K562 (cell line): ENCODE measurements at regions of chr17 and their contacts with region 1.

Region 1: DNA sequence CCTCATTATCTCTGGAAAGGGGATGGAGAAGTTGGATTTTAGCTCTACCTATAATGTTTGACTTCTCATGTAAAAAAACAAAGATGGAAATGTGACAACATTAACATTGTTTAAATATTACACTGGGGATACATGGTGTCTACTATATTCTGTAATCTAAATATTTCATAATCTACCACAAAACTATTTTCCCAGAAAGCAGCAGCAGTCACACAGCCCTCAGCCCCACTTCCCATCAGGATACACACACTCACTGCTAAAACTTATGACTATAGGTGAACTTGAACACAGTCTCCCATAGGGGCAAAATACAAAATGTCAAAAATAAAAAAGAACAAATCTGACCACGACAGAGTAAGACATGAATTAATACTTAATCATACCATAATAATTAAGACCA is 95.7 kb downstream of the KANSL1 start:
- DNase-seq: no peak
- ATAC-seq: no peak
- H3K4me3 ChIP-seq: no peak overlapping the region
- H3K27ac ChIP-seq: no peak overlapping the region
- H3K4me1 ChIP-seq: peaks cover 16 to 23% of the 10 kb centered on the region in 2 experiments
- H3K27me3 ChIP-seq: no peaks in the 10 kb centered on the region
- CTCF ChIP-seq: no peak
- EP300 ChIP-seq: no peak
- POLR2A ChIP-seq: no peak
- RAD21 ChIP-seq: no peak

Region 2: DNA sequence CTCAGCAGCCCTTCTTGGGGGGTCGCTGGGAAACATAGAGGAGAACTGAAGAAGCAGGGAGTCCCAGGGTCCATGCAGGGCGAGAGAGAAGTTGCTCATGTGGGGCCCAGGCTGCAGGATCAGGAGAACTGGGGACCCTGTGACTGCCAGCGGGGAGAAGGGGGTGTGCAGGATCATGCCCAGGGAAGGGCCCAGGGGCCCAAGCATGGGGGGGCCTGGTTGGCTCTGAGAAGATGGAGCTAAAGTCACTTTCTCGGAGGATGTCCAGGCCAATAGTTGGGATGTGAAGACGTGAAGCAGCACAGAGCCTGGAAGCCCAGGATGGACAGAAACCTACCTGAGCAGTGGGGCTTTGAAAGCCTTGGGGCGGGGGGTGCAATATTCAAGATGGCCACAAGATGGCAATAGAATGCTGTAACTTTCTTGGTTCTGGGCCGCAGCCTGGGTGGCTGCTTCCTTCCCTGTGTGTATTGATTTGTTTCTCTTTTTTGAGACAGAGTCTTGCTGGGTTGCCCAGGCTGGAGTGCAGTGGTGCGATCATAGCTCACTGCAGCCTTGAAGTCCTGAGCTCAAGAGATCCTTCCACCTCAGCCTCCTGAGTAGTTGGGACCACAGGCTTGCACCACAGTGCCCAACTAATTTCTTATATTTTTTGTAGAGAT is 95.1 kb before region 1 on chr17:
- CTCF ChIA-PET with region 1: no interaction called
- POLR2A ChIA-PET with region 1: no interaction called
- in situ Hi-C with region 1: no loop called
- intact Hi-C with region 1: no loop called
- DNase-seq: peak; percentile 74 to 79 (median 76)
- ATAC-seq: peak; percentile 95
- H3K4me3 ChIP-seq: no peak overlapping the region
- H3K27ac ChIP-seq: no peak overlapping the region
- H3K4me1 ChIP-seq: peaks cover 0 to 12% of the 10 kb centered on the region in 2 experiments; a peak in 2 of 5 replicates
- H3K27me3 ChIP-seq: no peaks in the 10 kb centered on the region
- CTCF ChIP-seq: peak; percentile 88 to 91 (median 91)
- EP300 ChIP-seq: no peak
- POLR2A ChIP-seq: no peak
- RAD21 ChIP-seq: peak; percentile 79 to 91

Region 3: DNA sequence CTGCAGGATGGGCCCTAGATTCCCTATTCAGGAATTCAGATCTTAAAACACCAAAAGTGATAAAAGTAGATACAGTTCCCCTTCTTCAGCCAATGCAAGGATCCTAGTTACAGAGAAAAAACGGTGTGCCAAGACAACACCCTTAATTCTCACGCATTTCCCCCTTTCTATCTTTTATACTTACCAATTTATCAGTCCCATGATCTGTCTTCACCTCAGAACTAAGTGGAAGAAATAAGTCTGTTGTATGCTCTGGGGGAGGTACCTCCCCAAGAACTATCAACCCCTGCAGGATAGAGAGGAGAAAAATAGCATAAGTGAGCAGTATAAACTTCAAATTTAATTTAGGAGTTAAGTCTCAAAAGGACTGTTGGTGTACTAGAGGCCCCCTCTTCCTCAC is 15.2 kb before region 1 on chr17:
- CTCF ChIA-PET with region 1: no interaction called
- POLR2A ChIA-PET with region 1: interaction called, 12 read pairs
- in situ Hi-C with region 1: no loop called
- intact Hi-C with region 1: no loop called
- DNase-seq: no peak
- ATAC-seq: peak; percentile 3; the same call in 2 of the 3 replicates
- H3K4me3 ChIP-seq: no peak overlapping the region
- H3K27ac ChIP-seq: peak overlapping the region; percentile 59; the same call in 2 of the 3 replicates
- H3K4me1 ChIP-seq: peaks cover 22 to 63% of the 10 kb centered on the region in 2 experiments
- H3K27me3 ChIP-seq: no peaks in the 10 kb centered on the region
- CTCF ChIP-seq: no peak
- EP300 ChIP-seq: no peak
- POLR2A ChIP-seq: no peak
- RAD21 ChIP-seq: no peak

Region 4: GRCh38 chr17:46115699-46116098 is 18.2 kb after region 1 on chr17:
- CTCF ChIA-PET with region 1: no interaction called
- POLR2A ChIA-PET with region 1: interaction called, 11 read pairs
- in situ Hi-C with region 1: no loop called
- intact Hi-C with region 1: no loop called
- DNase-seq: peak in 1 of 4 experiments; percentile 31
- ATAC-seq: peak; percentile 63
- H3K4me3 ChIP-seq: no peak overlapping the region
- H3K27ac ChIP-seq: no peak overlapping the region
- H3K4me1 ChIP-seq: peaks cover 24 to 26% of the 10 kb centered on the region in 2 experiments
- H3K27me3 ChIP-seq: no peaks in the 10 kb centered on the region
- CTCF ChIP-seq: no peak
- EP300 ChIP-seq: no peak
- POLR2A ChIP-seq: no peak
- RAD21 ChIP-seq: no peak